ENCODE measurements at regions of chr1 and their contacts with region 1.

Region 1: DNA sequence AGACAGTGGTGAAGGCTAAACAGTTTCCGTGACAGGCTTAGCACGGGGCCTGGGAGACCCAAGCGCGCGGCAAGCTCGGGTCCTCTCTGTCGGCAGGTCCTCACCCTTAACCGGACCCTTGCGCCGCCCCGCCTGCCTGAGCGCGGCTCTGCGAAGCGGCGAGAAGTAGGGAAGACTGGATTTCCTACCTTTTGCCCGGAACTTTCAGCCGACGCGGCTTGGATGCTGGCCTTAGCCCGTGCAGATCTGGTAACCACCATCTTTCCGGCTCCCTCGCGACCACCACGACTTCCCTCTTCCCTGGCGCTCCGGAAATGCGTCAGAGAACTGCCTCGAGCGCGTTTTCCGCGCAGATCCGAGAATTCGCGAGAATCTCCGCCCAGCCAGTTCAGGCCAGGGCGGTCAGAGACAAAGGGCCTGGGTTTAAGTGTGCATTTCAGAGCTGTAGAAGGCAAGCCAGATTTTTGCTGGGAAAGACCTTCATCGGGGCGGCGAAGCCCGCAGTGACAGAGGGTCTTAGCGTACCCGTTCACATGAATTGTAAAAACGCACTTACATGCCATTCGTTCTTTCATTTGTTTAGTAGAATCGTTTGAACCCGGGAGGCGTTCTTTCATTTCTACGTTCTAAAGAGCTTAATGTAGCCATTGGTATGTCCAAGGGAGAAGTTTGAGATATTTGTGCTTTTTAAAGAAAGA is at the start of gene DNTTIP2:
- DNase-seq: peak; percentile 96
- ATAC-seq: peak; percentile 88
- H3K4me3 Mint-ChIP-seq: peak within 1 kb of the TSS; percentile 88
- H3K27ac Mint-ChIP-seq: peak within 1 kb of the TSS; percentile 96
- H3K4me1 Mint-ChIP-seq: peaks cover 39% of the 10 kb centered on the region
- H3K27me3 Mint-ChIP-seq: no peaks in the 10 kb centered on the region
- total RNA-seq, gene DNTTIP2: 60.8 to 74.5 TPM

Region 2: GRCh38 chr1:93768380-93768863 is 110.6 kb before region 1 on chr1:
- CTCF ChIA-PET with region 1: no interaction called
- DNase-seq: no peak
- ATAC-seq: no peak
- H3K4me3 Mint-ChIP-seq: no peak overlapping the region
- H3K27ac Mint-ChIP-seq: no peak overlapping the region
- H3K4me1 Mint-ChIP-seq: peaks cover 27% of the 10 kb centered on the region
- H3K27me3 Mint-ChIP-seq: peaks cover 5% of the 10 kb centered on the region

Region 3: DNA sequence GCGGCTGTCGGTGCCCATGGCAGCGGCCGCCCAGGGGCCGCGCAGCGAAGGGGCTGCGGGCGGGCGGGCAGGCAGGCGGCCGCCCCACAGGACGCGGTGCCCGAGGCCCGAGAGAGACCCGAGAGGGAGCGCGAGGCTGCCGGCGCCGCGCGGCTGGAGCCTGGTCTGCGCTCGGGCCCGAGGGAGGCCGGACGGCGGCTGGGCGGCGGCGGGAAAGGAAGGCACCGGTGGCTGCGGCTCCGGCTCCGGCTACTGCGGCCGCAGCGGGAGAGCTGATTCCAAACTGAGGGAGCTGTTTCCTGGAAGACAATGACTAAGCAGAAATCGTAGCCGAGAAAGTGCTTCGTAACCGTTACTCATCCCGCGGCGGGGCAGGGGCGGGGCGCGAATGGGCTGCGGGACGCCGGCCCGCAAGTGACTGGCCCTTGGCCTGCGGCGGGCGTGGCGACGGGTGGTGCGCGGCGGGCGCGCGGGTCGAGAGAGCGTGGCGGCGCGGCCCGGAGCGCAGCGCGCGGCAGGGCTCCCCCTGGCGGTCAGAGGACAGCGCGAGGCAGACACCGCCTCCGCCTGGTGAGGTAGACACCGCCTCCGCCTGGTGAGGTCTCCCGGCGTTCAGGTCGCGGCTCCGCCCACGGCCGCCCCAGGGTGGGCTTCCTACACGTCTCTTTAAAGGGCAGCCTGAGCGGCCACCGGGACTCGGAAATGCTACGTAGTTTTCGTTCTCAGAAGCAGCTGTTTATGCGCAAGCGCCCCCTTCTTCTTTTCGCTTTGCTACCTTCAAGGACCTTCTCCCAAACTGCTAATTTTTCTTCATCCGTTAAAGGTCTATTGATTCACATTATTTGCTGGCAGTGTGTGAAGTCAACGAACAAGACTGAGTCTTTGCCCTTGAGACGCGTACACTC is 30.4 kb after region 1 on chr1 and contains the start of gene GCLM:
- CTCF ChIA-PET with region 1: interaction called, 15 read pairs
- DNase-seq: peak; percentile 92
- ATAC-seq: peak; percentile 94
- H3K4me3 Mint-ChIP-seq: peak within 1 kb of the TSS; percentile 88
- H3K27ac Mint-ChIP-seq: peak within 1 kb of the TSS; percentile 85
- H3K4me1 Mint-ChIP-seq: peaks cover 34% of the 10 kb centered on the region
- H3K27me3 Mint-ChIP-seq: peaks cover 13% of the 10 kb centered on the region
- total RNA-seq, gene GCLM: 24.3 to 25.7 TPM

Measured in activated CD8-positive, alpha-beta memory T cell treated with anti-CD3 and anti-CD28 coated beads, Interleukin-2, amount 10 ng/mL, durations not matched to agents 7 days and 5 days (primary cell).